Esophagus muscularis mucosa (tissue), 4 donors: ENCODE measurements at regions of chr9 and their contacts with region 1.

Region 1: DNA sequence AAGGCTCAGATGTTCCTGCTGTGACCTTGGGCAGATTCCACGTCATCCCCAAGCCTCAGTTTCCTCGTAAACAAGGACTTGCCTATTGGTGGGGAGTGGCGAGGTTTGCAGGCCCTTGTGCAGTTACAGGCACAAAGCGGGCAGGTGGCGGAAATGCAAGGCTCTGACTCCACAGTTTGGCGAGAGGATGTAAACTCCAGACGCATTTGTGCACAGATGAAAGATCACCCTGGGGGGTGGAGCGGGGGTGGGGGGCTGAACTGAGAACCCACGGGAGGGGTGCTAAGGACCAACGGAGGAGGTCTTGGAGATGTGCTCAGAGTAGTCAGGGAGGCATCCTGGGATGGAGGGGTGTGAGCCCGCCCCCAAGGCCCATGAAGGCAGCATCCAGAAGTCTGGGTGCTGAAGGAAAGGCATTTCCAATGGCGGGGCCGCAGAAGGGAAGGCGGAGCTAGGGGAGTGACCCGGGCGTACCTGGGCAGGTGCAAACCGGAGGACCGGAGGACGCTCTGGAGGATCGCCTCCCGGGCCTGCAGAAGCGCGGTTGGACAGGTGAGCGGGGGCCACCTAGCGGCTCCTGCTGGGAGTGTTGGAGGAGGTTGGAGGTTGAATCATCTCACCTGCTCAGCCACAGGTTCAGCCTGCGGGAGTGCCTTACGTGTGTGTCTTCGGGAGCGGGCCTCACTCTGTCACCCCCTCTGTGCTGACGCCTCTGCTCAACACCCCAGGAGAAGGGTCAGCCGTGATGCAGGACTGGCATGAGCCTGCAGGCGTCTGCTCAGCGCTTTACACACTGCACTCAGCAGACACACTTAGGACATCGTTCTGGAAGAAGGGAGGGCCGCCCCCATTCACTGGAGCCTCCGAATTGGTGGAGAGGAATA is 1.9 kb upstream of the FIBCD1 start:
- DNase-seq: no peak
- H3K4me3 ChIP-seq: no peak overlapping the region
- H3K27ac ChIP-seq: no peak overlapping the region
- H3K4me1 ChIP-seq: peaks cover 18 to 55% (median 51%) of the 10 kb centered on the region in 4 donors
- H3K27me3 ChIP-seq: peaks cover 14 to 82% (median 35%) of the 10 kb centered on the region in 4 donors
- CTCF ChIP-seq: peak; percentile 78 to 86 (median 81)
- EP300 ChIP-seq: no peak
- POLR2A ChIP-seq: no peak

Region 2: GRCh38 chr9:130701056-130702022 is 239.6 kb before region 1 on chr9:
- intact Hi-C with region 1: loop called (anchors 2 kb)
- DNase-seq: no peak
- H3K4me3 ChIP-seq: no peak overlapping the region
- H3K27ac ChIP-seq: peak overlapping the region; percentile 50 to 71 (median 67)
- H3K4me1 ChIP-seq: peaks cover 16 to 33% (median 30%) of the 10 kb centered on the region in 4 donors
- H3K27me3 ChIP-seq: no peaks in the 10 kb centered on the region
- CTCF ChIP-seq: peak; percentile 94 to 95 (median 95)
- EP300 ChIP-seq: no peak
- POLR2A ChIP-seq: no peak

Region 3: DNA sequence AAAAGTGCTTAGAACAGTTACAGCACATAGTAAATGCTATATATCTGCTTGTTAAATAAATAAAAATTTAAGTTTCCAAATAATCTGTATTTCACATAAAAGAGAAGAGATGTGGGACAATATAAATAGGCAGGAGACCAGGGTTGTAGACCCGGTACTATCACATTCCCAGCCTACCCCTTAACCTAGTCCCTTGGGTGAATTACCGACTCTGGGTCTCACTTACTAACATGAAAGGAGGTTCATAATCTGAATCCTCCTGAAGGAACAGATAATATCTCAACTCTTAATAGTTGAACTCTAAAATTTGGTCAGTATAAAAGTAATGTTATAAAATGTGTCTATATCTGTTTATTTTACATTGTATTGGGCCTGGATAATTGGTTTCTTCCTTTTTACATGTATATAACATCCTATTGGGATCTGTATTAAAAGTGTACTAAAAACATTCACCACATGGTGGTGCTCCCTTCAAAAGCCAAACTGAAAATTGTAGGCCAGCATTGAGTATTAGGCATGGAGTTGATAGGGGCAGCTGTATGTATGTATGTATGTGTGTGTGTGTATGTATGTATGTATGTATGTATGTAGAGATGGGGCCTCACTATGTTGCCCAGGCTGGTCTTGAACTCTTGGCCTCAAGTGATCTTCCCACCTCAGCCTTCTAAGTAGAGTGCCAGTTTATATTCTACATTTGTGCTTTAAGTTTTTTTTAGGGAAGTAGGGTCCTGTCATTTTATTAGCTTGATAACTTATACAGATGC is 170.1 kb before region 1 on chr9:
- intact Hi-C with region 1: loop called (anchors 5 kb)
- DNase-seq: no peak
- H3K4me3 ChIP-seq: no peak overlapping the region
- H3K27ac ChIP-seq: no peak overlapping the region
- H3K4me1 ChIP-seq: peaks cover 14 to 55% (median 39%) of the 10 kb centered on the region in 4 donors
- H3K27me3 ChIP-seq: no peaks in the 10 kb centered on the region
- CTCF ChIP-seq: peak; percentile 62 to 77 (median 73)
- EP300 ChIP-seq: no peak
- POLR2A ChIP-seq: no peak

Region 4: DNA sequence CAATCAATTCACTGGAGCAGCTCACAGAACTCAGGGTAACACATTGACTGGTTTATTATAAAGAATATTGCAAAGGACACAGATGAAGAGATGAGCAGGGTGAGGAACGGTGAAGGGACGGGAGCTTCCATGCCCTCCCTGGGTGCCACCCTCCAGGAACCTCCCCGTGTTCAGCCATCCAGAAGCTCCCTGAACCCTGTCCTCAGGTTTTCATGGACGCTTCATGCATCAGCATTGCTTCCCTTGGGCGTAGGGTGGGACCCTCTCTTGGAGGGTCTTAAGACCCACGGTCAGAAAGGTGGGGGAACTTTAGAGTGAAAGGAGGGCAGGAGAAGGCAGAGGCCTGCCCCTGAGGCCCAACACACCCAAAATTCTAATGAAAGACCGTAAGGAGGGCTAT is 80.8 kb after region 1 on chr9:
- intact Hi-C with region 1: no loop called
- DNase-seq: no peak
- H3K4me3 ChIP-seq: no peak overlapping the region
- H3K27ac ChIP-seq: no peak overlapping the region
- H3K4me1 ChIP-seq: peaks cover 0 to 4% (median 0%) of the 10 kb centered on the region in 4 donors
- H3K27me3 ChIP-seq: peaks cover 0 to 64% (median 0%) of the 10 kb centered on the region in 4 donors
- CTCF ChIP-seq: no peak
- EP300 ChIP-seq: no peak
- POLR2A ChIP-seq: no peak

Region 5: DNA sequence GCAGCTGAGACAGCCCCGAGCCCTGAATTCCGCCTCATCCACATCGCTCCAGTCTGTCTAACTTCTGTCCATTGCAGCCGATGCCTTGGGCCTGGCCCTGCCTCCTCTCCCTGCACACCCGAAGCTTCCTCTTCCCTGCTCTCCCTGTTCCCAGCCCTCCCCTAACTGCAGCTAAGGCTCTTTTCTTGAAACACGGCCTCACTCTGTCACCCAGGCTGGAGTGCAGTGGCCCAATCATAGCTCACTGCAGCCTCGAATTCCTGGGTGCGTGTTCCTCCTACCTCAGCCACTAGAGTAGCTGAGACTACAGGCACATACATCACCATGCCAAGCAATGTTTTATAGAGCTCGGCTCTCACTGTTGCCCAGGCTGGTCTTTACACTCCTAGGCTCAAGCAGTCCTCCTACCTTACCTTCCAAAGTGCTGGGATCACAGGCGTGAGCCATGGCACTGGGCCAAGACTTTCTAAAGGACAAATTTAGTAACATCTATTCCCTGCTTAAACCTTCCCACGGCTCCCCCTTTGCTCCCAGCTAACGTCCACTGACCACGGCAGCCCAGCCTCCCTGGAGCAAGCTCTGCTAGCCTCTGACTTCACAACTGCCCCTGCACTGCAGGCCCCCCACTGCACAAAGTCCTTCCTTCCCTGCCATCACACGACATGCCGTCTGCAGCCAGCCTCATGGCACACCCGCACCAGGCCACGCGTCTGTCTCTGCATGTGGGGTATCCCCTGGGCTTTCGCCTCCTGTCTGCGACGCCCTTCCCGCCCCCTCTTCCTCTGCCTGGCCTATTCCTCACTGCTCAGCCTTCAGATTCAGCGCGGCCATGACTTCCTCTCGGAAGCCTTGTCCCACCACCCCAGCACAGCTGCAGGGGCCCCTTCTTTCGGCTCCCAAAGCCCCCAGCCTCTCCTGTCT is 96.7 kb after region 1 on chr9:
- intact Hi-C with region 1: loop called (anchors 10 kb)
- DNase-seq: no peak
- H3K4me3 ChIP-seq: no peak overlapping the region
- H3K27ac ChIP-seq: peak overlapping the region in 2 of 4 donors; percentile 3 to 9
- H3K4me1 ChIP-seq: peaks cover 16 to 18% (median 16%) of the 10 kb centered on the region in 4 donors
- H3K27me3 ChIP-seq: no peaks in the 10 kb centered on the region
- CTCF ChIP-seq: no peak
- EP300 ChIP-seq: no peak
- POLR2A ChIP-seq: no peak